CD8-positive, alpha-beta T cell (primary cell): ENCODE measurements at regions of chr10 and their contacts with region 1.

Region 1: GRCh38 chr10:13099666-13100348 is at the start of gene OPTN:
- DNase-seq: peak; percentile 62 to 93 (median 79)
- ATAC-seq: peak; percentile 75
- H3K4me3 ChIP-seq: peak within 1 kb of the TSS; percentile 62 to 89
- H3K4me3 Mint-ChIP-seq: peak within 1 kb of the TSS; percentile 92
- H3K27ac ChIP-seq: peak within 1 kb of the TSS; percentile 69 to 94
- H3K27ac Mint-ChIP-seq: peak within 1 kb of the TSS; percentile 98
- H3K4me1 ChIP-seq: peaks cover 6% of the 10 kb centered on the region
- H3K4me1 Mint-ChIP-seq: peaks cover 46% of the 10 kb centered on the region
- H3K27me3 ChIP-seq: no peaks in the 10 kb centered on the region
- H3K27me3 Mint-ChIP-seq: no peaks in the 10 kb centered on the region
- CTCF ChIP-seq: peak; percentile 57
- total RNA-seq, gene OPTN: 66.3 to 71.6 TPM

Region 2: GRCh38 chr10:12214763-12215218 is 885.0 kb before region 1 on chr10:
- CTCF ChIA-PET with region 1: interaction called, 3 read pairs
- POLR2A ChIA-PET with region 1: no interaction called
- intact Hi-C with region 1: loop called in 1 of 2 experiments (anchors 5 kb)
- DNase-seq: peak in 6 of 9 experiments; percentile 10 to 75 (median 52)
- ATAC-seq: peak; percentile 44
- H3K4me3 ChIP-seq: peak overlapping the region in 1 of 2 experiments; percentile 24
- H3K4me3 Mint-ChIP-seq: peak overlapping the region; percentile 69
- H3K27ac ChIP-seq: peak overlapping the region in 1 of 2 experiments; percentile 51
- H3K27ac Mint-ChIP-seq: peak overlapping the region; percentile 87
- H3K4me1 ChIP-seq: peaks cover 5% of the 10 kb centered on the region
- H3K4me1 Mint-ChIP-seq: peaks cover 17% of the 10 kb centered on the region
- H3K27me3 ChIP-seq: no peaks in the 10 kb centered on the region
- H3K27me3 Mint-ChIP-seq: no peaks in the 10 kb centered on the region
- CTCF ChIP-seq: peak; percentile 73

Region 3: GRCh38 chr10:12656518-12657142 is 443.2 kb before region 1 on chr10:
- CTCF ChIA-PET with region 1: interaction called, 3 read pairs
- POLR2A ChIA-PET with region 1: no interaction called
- intact Hi-C with region 1: loop called in 1 of 2 experiments (anchors 1 kb)
- DNase-seq: peak in 2 of 9 experiments; percentile 59 to 71
- ATAC-seq: peak; percentile 81
- H3K4me3 ChIP-seq: no peak overlapping the region
- H3K4me3 Mint-ChIP-seq: peak overlapping the region; percentile 29
- H3K27ac ChIP-seq: no peak overlapping the region
- H3K27ac Mint-ChIP-seq: no peak overlapping the region
- H3K4me1 ChIP-seq: no peaks in the 10 kb centered on the region
- H3K4me1 Mint-ChIP-seq: peaks cover 8% of the 10 kb centered on the region
- H3K27me3 ChIP-seq: no peaks in the 10 kb centered on the region
- H3K27me3 Mint-ChIP-seq: no peaks in the 10 kb centered on the region
- CTCF ChIP-seq: peak; percentile 72

Region 4: DNA sequence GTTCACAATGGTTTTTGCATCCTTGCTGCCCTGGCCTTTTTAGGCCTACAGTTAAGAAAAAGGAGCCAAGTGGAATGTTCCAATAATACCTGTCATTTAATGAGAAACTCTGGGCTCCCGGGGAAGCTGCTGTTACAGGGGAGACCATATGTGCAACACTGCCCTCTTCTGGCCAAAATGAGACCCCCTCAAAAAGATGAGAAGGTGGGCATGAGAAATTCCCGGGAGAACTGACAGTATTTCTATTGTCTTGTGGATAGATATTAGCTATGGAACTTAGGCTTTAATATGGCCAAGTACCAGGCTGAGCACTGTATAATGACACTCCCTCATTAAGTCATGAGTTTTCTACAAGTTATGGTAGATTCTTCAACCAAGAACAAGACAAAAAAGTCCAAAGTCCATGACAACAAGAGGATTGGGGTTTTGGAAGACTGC is 197.7 kb before region 1 on chr10:
- CTCF ChIA-PET with region 1: interaction called, 4 read pairs
- POLR2A ChIA-PET with region 1: no interaction called
- intact Hi-C with region 1: loop called in 1 of 2 experiments (anchors 1 kb)
- DNase-seq: peak in 8 of 9 experiments; percentile 12 to 68 (median 48)
- ATAC-seq: no peak
- H3K4me3 ChIP-seq: no peak overlapping the region
- H3K4me3 Mint-ChIP-seq: no peak overlapping the region
- H3K27ac ChIP-seq: no peak overlapping the region
- H3K27ac Mint-ChIP-seq: no peak overlapping the region
- H3K4me1 ChIP-seq: no peaks in the 10 kb centered on the region
- H3K4me1 Mint-ChIP-seq: no peaks in the 10 kb centered on the region
- H3K27me3 ChIP-seq: no peaks in the 10 kb centered on the region
- H3K27me3 Mint-ChIP-seq: peaks cover 10% of the 10 kb centered on the region
- CTCF ChIP-seq: peak; percentile 67

Region 5: GRCh38 chr10:13080643-13081042 is 19.2 kb before region 1 on chr10:
- CTCF ChIA-PET with region 1: no interaction called
- POLR2A ChIA-PET with region 1: no interaction called
- intact Hi-C with region 1: no loop called
- DNase-seq: no peak
- ATAC-seq: no peak
- H3K4me3 ChIP-seq: no peak overlapping the region
- H3K4me3 Mint-ChIP-seq: no peak overlapping the region
- H3K27ac ChIP-seq: no peak overlapping the region
- H3K27ac Mint-ChIP-seq: no peak overlapping the region
- H3K4me1 ChIP-seq: no peaks in the 10 kb centered on the region
- H3K4me1 Mint-ChIP-seq: no peaks in the 10 kb centered on the region
- H3K27me3 ChIP-seq: no peaks in the 10 kb centered on the region
- H3K27me3 Mint-ChIP-seq: peaks cover 12% of the 10 kb centered on the region
- CTCF ChIP-seq: no peak

Region 6: GRCh38 chr10:13257621-13258140 is 157.9 kb after region 1 on chr10:
- CTCF ChIA-PET with region 1: no interaction called
- POLR2A ChIA-PET with region 1: no interaction called
- intact Hi-C with region 1: no loop called
- DNase-seq: no peak
- ATAC-seq: no peak
- H3K4me3 ChIP-seq: no peak overlapping the region
- H3K4me3 Mint-ChIP-seq: no peak overlapping the region
- H3K27ac ChIP-seq: no peak overlapping the region
- H3K27ac Mint-ChIP-seq: no peak overlapping the region
- H3K4me1 ChIP-seq: no peaks in the 10 kb centered on the region
- H3K4me1 Mint-ChIP-seq: peaks cover 3% of the 10 kb centered on the region
- H3K27me3 ChIP-seq: no peaks in the 10 kb centered on the region
- H3K27me3 Mint-ChIP-seq: peaks cover 7% of the 10 kb centered on the region
- CTCF ChIP-seq: no peak

Region 7: GRCh38 chr10:13299437-13300287 is 199.9 kb after region 1 on chr10 and contains the start of gene PHYH:
- CTCF ChIA-PET with region 1: interaction called, 5 read pairs
- POLR2A ChIA-PET with region 1: interaction called, 11 read pairs
- intact Hi-C with region 1: loop called (anchors 1 kb)
- DNase-seq: peak; percentile 65 to 93 (median 80)
- ATAC-seq: peak; percentile 52
- H3K4me3 ChIP-seq: peak within 1 kb of the TSS; percentile 68 to 70
- H3K4me3 Mint-ChIP-seq: peak within 1 kb of the TSS; percentile 84
- H3K27ac ChIP-seq: peak within 1 kb of the TSS; percentile 81 to 91
- H3K27ac Mint-ChIP-seq: peak within 1 kb of the TSS; percentile 94
- H3K4me1 ChIP-seq: peaks cover 28% of the 10 kb centered on the region
- H3K4me1 Mint-ChIP-seq: peaks cover 26% of the 10 kb centered on the region
- H3K27me3 ChIP-seq: no peaks in the 10 kb centered on the region
- H3K27me3 Mint-ChIP-seq: no peaks in the 10 kb centered on the region
- CTCF ChIP-seq: no peak
- total RNA-seq, gene PHYH: 12.6 TPM